CD14-positive monocyte (primary cell): ENCODE measurements at regions of chr7 and their contacts with region 1.

Region 1: GRCh38 chr7:140810830-140811556 is 113.7 kb downstream of the BRAF start:
- DNase-seq: peak; percentile 42 to 62 (median 60)
- H3K4me3 ChIP-seq: no peak overlapping the region
- H3K4me3 Mint-ChIP-seq: no peak overlapping the region
- H3K27ac ChIP-seq: no peak overlapping the region
- H3K27ac Mint-ChIP-seq: peak overlapping the region in 1 of 7 donors; percentile 67
- H3K4me1 ChIP-seq: no peaks in the 10 kb centered on the region
- H3K4me1 Mint-ChIP-seq: no peaks in the 10 kb centered on the region
- H3K27me3 ChIP-seq: no peaks in the 10 kb centered on the region
- H3K27me3 Mint-ChIP-seq: no peaks in the 10 kb centered on the region
- CTCF ChIP-seq: peak; percentile 78

Region 2: GRCh38 chr7:140983802-140984201 is 172.8 kb after region 1 on chr7:
- intact Hi-C with region 1: loop called (anchors 10 kb)
- DNase-seq: peak in 1 of 3 donors; percentile 17
- H3K4me3 ChIP-seq: no peak overlapping the region
- H3K4me3 Mint-ChIP-seq: no peak overlapping the region
- H3K27ac ChIP-seq: no peak overlapping the region
- H3K27ac Mint-ChIP-seq: no peak overlapping the region
- H3K4me1 ChIP-seq: peaks cover 10 to 22% of the 10 kb centered on the region in 2 donors
- H3K4me1 Mint-ChIP-seq: peaks cover 26% of the 10 kb centered on the region
- H3K27me3 ChIP-seq: no peaks in the 10 kb centered on the region
- H3K27me3 Mint-ChIP-seq: peaks cover 0 to 2% (median 0%) of the 10 kb centered on the region in 3 donors
- CTCF ChIP-seq: peak; percentile 76

Region 3: GRCh38 chr7:141014524-141015395 is 203.8 kb after region 1 on chr7 and contains the start of gene MRPS33:
- intact Hi-C with region 1: loop called (anchors 2 to 5 kb)
- DNase-seq: peak; percentile 89 to 93 (median 91)
- H3K4me3 ChIP-seq: peak within 1 kb of the TSS; percentile 55 to 83 (median 78)
- H3K4me3 Mint-ChIP-seq: peak within 1 kb of the TSS; percentile 92 to 98
- H3K27ac ChIP-seq: peak within 1 kb of the TSS; percentile 71 to 92
- H3K27ac Mint-ChIP-seq: peak within 1 kb of the TSS; percentile 93 to 99 (median 96)
- H3K4me1 ChIP-seq: peaks cover 12 to 18% of the 10 kb centered on the region in 2 donors
- H3K4me1 Mint-ChIP-seq: peaks cover 21% of the 10 kb centered on the region
- H3K27me3 ChIP-seq: peaks cover 12 to 13% of the 10 kb centered on the region in 2 donors
- H3K27me3 Mint-ChIP-seq: peaks cover 14 to 22% (median 16%) of the 10 kb centered on the region in 3 donors
- CTCF ChIP-seq: peak; percentile 43
- polyA plus RNA-seq, gene MRPS33: 8.9 to 52.7 (median 45.0) TPM

Region 4: DNA sequence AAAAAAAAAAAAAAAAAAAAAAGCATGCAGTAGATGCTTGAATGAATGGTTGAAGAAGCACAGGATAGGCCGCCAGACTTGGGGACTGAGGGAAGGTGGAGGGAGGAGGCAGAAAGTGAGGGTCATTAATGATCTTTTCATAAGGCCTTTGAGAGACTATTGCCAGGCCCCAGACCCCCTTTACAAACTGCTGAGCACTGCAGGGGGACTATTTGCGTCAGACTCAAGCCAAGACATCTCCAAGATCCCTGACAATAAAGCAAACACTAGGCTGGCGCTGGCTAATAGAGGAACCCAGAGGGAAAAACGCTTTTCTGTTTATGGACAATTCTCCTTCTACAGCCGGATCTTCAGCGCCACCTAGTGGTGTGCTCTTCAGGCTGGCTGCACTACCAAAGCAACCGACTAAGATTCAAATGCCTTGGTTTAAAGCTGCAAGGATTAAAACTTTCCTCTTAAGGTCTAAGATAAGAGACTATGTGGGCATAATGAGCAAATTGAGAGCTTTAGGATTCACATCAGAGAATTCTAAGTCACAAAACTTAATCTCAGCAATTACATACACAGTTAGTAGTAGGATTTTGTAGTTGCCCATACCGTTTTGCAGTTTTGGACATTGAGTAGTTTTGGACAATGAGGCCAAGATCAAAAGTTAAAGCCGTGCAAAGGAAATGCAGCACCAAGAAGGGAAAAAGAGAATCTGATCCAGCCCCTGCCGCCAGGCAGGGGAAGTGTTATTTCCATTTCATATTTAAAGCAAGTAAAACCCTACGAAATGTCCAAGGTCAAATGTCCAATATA is 722.4 kb after region 1 on chr7:
- intact Hi-C with region 1: loop called in 1 of 2 experiments (anchors 10 kb)
- DNase-seq: peak; percentile 25 to 60 (median 57)
- H3K4me3 ChIP-seq: no peak overlapping the region
- H3K4me3 Mint-ChIP-seq: no peak overlapping the region
- H3K27ac ChIP-seq: no peak overlapping the region
- H3K27ac Mint-ChIP-seq: no peak overlapping the region
- H3K4me1 ChIP-seq: no peaks in the 10 kb centered on the region
- H3K4me1 Mint-ChIP-seq: peaks cover 2% of the 10 kb centered on the region
- H3K27me3 ChIP-seq: peaks cover 0 to 6% of the 10 kb centered on the region in 2 donors
- H3K27me3 Mint-ChIP-seq: peaks cover 9 to 16% (median 14%) of the 10 kb centered on the region in 3 donors
- CTCF ChIP-seq: peak; percentile 94